CD4-positive, alpha-beta T cell (primary cell): ENCODE measurements at regions of chr14 and their contacts with region 1.

Region 1: GRCh38 chr14:68788996-68789820 is 3.7 kb downstream of the ZFP36L1 start:
- DNase-seq: peak; percentile 81 to 94 (median 88)
- ATAC-seq: peak; percentile 44
- H3K4me3 ChIP-seq: peak overlapping the region; percentile 98
- H3K4me3 Mint-ChIP-seq: peak overlapping the region; percentile 92
- H3K27ac ChIP-seq: peak overlapping the region; percentile 67 to 100
- H3K27ac Mint-ChIP-seq: peak overlapping the region; percentile 99
- H3K4me1 ChIP-seq: peaks cover 58% of the 10 kb centered on the region
- H3K4me1 Mint-ChIP-seq: peaks cover 63% of the 10 kb centered on the region
- H3K27me3 ChIP-seq: no peaks in the 10 kb centered on the region
- H3K27me3 Mint-ChIP-seq: no peaks in the 10 kb centered on the region
- CTCF ChIP-seq: peak; percentile 82

Region 2: DNA sequence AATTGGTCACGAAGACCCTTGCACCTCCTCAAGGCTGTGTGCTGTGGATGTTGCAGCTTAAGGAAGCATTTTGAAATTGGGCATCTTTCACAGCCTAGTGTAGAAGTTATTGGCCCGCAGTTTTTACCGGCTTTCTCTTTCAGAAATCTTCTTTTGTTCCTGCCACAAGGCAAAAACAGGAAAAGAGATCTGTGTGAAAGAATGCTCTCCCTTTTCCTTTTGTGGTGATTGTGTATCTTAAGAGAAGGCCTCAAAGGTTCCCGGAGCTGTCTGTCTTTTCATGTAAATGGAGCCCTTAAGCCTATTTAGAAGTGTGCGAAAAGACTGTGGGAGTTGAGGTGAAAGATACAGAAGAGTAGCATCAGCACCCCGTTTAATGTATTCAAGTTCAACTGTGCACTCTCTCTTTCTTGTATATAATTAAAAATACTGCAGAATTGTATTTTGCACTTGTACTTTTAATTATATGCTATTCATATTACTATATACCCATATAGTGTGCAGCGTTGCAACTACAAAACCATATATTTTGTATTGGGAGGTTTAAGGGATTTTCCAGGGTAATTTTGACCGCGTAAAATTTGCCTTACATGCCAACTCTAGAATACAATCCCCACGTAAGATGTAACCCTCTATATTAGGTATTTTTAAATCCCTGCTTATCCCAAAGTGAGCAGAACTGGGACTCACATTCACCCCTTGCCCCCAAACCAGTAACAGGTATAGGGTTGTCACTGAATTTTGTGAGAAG is 527.9 kb before region 1 on chr14:
- CTCF ChIA-PET with region 1: no interaction called
- POLR2A ChIA-PET with region 1: interaction called, 22 read pairs
- intact Hi-C with region 1: no loop called
- DNase-seq: peak in 4 of 14 experiments; percentile 19 to 23 (median 22)
- ATAC-seq: peak; percentile 55
- H3K4me3 ChIP-seq: no peak overlapping the region
- H3K4me3 Mint-ChIP-seq: peak overlapping the region; percentile 77
- H3K27ac ChIP-seq: peak overlapping the region; percentile 54 to 67
- H3K27ac Mint-ChIP-seq: peak overlapping the region; percentile 79
- H3K4me1 ChIP-seq: peaks cover 37% of the 10 kb centered on the region
- H3K4me1 Mint-ChIP-seq: peaks cover 70% of the 10 kb centered on the region
- H3K27me3 ChIP-seq: no peaks in the 10 kb centered on the region
- H3K27me3 Mint-ChIP-seq: no peaks in the 10 kb centered on the region
- CTCF ChIP-seq: no peak

Region 3: GRCh38 chr14:68359837-68360552 is 429.2 kb before region 1 on chr14:
- CTCF ChIA-PET with region 1: interaction called, 3 read pairs
- POLR2A ChIA-PET with region 1: interaction called, 3 read pairs
- intact Hi-C with region 1: loop called in 1 of 2 experiments (anchors 10 kb)
- DNase-seq: peak in 1 of 14 experiments; percentile 37
- ATAC-seq: no peak
- H3K4me3 ChIP-seq: no peak overlapping the region
- H3K4me3 Mint-ChIP-seq: no peak overlapping the region
- H3K27ac ChIP-seq: no peak overlapping the region
- H3K27ac Mint-ChIP-seq: peak overlapping the region; percentile 68
- H3K4me1 ChIP-seq: peaks cover 18% of the 10 kb centered on the region
- H3K4me1 Mint-ChIP-seq: peaks cover 45% of the 10 kb centered on the region
- H3K27me3 ChIP-seq: no peaks in the 10 kb centered on the region
- H3K27me3 Mint-ChIP-seq: no peaks in the 10 kb centered on the region
- CTCF ChIP-seq: no peak

Region 4: DNA sequence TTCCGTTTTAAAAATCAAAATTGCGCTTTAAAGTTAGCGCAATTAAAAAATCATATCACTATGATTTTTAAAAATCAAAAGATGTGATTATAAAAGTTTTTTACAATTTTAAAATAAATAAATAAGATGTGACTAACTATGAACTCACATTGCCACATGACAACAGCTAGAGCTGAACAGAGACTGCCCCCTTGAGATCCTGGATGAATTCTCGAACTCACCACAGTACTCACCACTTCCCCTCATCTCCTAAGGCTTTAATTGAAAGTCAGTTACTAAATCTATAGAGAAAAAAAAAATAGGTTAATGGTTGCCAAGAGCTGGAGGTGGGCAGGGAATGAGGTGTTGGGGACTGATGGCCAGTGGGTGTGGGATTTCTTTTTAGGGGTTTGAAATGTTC is 380.5 kb before region 1 on chr14:
- CTCF ChIA-PET with region 1: no interaction called
- POLR2A ChIA-PET with region 1: interaction called, 3 read pairs
- intact Hi-C with region 1: loop called in 1 of 2 experiments (anchors 2 kb)
- DNase-seq: peak in 4 of 14 experiments; percentile 41 to 62 (median 60)
- ATAC-seq: peak; percentile 41
- H3K4me3 ChIP-seq: no peak overlapping the region
- H3K4me3 Mint-ChIP-seq: no peak overlapping the region
- H3K27ac ChIP-seq: no peak overlapping the region
- H3K27ac Mint-ChIP-seq: no peak overlapping the region
- H3K4me1 ChIP-seq: peaks cover 19% of the 10 kb centered on the region
- H3K4me1 Mint-ChIP-seq: peaks cover 42% of the 10 kb centered on the region
- H3K27me3 ChIP-seq: no peaks in the 10 kb centered on the region
- H3K27me3 Mint-ChIP-seq: no peaks in the 10 kb centered on the region
- CTCF ChIP-seq: peak; percentile 44

Region 5: DNA sequence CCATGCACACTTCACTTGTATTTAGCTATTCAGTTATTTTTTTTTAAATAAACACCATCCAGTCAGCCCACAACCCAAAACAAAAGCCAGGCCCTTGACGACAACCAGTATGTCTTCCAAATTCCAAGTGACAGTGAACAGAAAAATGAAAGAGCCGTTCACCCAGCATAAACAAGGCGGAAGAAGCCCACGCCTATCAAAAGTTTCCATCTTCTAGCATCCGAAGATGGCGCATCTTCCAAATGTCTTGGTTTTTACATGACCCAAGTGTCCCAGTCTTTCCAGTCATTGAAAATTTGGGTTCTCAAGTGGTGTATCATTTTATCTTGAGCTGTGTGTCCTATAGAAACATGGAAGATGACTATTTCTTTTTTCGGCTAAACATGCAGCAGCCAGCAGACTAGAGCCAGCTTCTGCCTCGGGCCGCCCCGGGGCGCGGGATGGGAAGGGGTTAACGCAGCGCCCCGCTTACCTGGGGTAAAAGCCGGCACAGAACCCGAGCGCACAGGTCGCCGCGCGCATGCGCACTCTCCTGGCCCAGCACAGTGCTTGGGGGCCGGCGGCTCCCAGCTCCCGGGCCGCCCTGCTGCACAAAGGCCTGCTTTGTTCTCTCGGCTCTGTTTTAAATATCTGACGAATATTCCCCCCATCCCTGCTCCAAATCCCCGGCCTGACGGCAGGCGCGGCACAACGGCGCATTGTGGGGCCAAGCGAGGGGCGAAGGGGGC is 161.2 kb before region 1 on chr14:
- CTCF ChIA-PET with region 1: no interaction called
- POLR2A ChIA-PET with region 1: interaction called, 14 read pairs
- intact Hi-C with region 1: loop called (anchors 5 kb)
- DNase-seq: peak; percentile 24 to 83 (median 58)
- ATAC-seq: peak; percentile 64
- H3K4me3 ChIP-seq: peak overlapping the region; percentile 60
- H3K4me3 Mint-ChIP-seq: peak overlapping the region; percentile 90
- H3K27ac ChIP-seq: peak overlapping the region in 1 of 2 donors; percentile 62
- H3K27ac Mint-ChIP-seq: peak overlapping the region; percentile 89
- H3K4me1 ChIP-seq: peaks cover 15% of the 10 kb centered on the region
- H3K4me1 Mint-ChIP-seq: peaks cover 31% of the 10 kb centered on the region
- H3K27me3 ChIP-seq: no peaks in the 10 kb centered on the region
- H3K27me3 Mint-ChIP-seq: no peaks in the 10 kb centered on the region
- CTCF ChIP-seq: no peak

Region 6: GRCh38 chr14:68775143-68776126 is 13.8 kb before region 1 on chr14:
- CTCF ChIA-PET with region 1: interaction called, 36 read pairs
- POLR2A ChIA-PET with region 1: interaction called, 230 read pairs
- intact Hi-C with region 1: loop called in 1 of 2 experiments (anchors 2 kb)
- DNase-seq: peak in 1 of 14 experiments; percentile 24
- ATAC-seq: no peak
- H3K4me3 ChIP-seq: no peak overlapping the region
- H3K4me3 Mint-ChIP-seq: no peak overlapping the region
- H3K27ac ChIP-seq: no peak overlapping the region
- H3K27ac Mint-ChIP-seq: peak overlapping the region; percentile 27
- H3K4me1 ChIP-seq: peaks cover 83% of the 10 kb centered on the region
- H3K4me1 Mint-ChIP-seq: peaks cover 87% of the 10 kb centered on the region
- H3K27me3 ChIP-seq: no peaks in the 10 kb centered on the region
- H3K27me3 Mint-ChIP-seq: no peaks in the 10 kb centered on the region
- CTCF ChIP-seq: no peak